ENCODE measurements at regions of chr1 and their contacts with region 1.

Region 1: DNA sequence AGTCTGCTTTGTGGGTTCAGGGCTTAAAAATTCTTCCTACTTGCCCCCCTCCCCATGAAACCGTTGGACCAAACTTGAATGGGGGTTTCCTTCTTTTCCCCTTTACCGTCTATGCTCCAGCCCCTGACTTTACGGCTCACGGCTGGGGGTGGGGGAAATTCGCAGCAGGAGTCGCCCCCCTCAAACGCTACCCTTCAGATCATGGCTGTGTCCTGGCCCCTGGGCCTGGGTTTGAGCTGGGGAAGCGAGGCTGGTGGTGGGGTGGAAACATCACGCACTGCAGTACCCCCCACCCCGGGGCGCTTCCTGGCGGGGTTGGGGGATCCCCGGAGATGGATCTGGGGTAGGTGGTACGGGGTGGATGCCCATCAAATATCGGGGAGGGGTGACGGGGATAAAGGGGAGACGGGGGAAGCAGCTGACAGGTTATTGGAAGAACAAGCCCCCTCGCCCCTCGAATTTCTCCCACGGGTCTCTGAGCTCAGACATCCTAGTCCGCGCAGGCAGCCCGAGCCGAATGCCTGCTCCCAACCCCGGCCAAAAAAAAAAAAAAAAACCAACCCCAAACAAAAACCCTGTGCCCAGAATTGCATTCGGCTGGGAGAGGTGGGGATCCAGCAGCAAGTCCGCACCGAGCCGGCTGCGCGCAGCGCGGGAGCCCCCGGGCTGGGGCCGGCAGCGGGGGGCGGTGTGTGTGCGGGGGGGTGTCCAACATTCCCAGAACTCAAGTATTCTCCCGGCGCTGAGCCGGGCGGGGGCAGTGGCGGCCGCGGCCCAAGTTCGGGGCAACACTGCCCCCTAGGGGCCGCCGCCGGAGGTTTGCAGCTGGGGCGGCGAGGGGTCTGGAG is 59.0 kb upstream of the ACOT11 start:
- DNase-seq: peak; percentile 94
- H3K4me3 Mint-ChIP-seq: peak overlapping the region; percentile 86
- H3K27ac Mint-ChIP-seq: peak overlapping the region; percentile 69
- H3K4me1 Mint-ChIP-seq: peaks cover 31% of the 10 kb centered on the region
- H3K27me3 Mint-ChIP-seq: peaks cover 29% of the 10 kb centered on the region

Region 2: DNA sequence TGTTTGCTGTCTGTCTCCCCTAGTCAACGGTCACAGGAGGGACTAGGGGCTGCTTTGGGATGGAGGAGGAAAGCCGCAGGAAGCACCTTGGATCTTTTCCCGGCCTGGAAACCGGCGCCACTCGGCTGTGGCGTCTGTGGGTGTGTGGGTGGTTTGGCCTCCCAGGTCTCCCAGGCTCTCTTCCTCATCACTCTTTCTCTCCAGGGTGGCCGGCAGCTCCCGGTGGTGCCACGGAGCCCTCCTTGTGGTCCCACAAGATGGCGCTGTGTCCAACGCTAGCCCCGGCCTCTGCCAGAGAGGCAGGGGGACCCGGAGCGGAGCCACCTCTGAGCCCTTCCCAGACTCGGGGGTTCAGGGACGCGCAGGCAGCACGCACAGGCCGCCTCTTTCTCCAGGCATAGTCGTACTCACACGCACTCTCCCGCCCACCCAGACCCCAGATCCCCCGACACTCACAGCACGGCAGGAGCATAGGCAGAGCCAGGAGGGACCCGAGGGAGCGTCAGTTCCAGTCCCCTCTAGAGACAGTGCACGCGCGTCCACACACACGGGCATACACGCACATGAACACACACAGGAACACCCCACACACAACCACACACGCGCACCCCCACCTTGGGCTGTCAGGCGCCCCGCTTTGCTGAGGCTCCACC is 367.4 kb before region 1 on chr1:
- intact Hi-C with region 1: loop called (anchors 1 kb)
- DNase-seq: peak; percentile 91
- H3K4me3 Mint-ChIP-seq: peak overlapping the region; percentile 43
- H3K27ac Mint-ChIP-seq: no peak overlapping the region
- H3K4me1 Mint-ChIP-seq: peaks cover 7% of the 10 kb centered on the region
- H3K27me3 Mint-ChIP-seq: peaks cover 10% of the 10 kb centered on the region

Region 3: DNA sequence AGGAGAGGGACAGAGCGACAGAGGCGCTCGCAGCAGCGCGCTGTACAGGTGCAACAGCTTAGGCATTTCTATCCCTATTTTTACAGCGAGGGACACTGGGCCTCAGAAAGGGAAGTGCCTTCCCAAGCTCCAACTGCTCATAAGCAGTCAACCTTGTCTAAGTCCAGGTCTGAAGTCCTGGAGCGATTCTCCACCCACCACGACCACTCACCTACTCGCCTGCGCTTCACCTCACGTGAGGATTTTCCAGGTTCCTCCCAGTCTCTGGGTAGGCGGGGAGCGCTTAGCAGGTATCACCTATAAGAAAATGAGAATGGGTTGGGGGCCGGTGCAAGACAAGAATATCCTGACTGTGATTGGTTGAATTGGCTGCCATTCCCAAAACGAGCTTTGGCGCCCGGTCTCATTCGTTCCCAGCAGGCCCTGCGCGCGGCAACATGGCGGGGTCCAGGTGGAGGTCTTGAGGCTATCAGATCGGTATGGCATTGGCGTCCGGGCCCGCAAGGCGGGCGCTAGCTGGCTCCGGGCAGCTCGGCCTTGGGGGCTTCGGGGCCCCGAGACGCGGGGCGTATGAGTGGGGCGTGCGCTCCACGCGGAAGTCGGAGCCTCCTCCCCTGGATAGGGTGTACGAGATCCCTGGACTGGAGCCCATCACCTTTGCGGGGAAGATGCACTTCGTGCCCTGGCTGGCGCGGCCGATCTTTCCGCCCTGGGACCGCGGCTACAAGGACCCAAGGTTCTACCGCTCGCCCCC is 289.1 kb before region 1 on chr1 and contains the starts of genes CYB5RL and MRPL37:
- intact Hi-C with region 1: loop called (anchors 1 kb)
- DNase-seq: peak; percentile 98
- H3K4me3 Mint-ChIP-seq: peak within 1 kb of the TSS; percentile 88
- H3K27ac Mint-ChIP-seq: peak within 1 kb of the TSS; percentile 73
- H3K4me1 Mint-ChIP-seq: peaks cover 29% of the 10 kb centered on the region
- H3K27me3 Mint-ChIP-seq: no peaks in the 10 kb centered on the region
- total RNA-seq, gene CYB5RL: 10.1 and 11.3 TPM in 2 replicates
- total RNA-seq, gene MRPL37: 158 and 162 TPM in 2 replicates

Region 4: DNA sequence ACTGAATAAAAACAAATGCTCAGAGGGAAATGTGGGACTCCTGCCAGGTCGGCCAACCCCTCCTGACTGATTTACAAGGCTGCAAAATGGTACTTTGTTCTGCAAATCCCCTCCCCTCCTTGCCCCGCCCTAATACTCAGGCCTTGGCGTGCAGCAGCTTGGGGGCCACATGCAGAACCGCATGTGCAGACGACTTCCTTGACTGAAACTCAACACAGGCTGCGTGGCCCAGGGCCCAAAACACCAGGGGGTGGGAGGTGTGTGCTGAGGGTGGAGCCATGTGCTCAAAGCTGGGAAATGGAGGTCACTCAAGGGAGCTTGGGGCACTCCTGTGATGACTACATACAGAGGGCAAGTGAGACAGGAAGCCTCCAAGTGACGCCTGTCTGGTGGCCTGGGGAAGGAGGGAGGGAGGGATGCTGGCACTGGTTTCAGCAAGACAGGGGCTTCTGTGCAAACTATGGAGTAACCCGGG is 201.8 kb before region 1 on chr1:
- intact Hi-C with region 1: loop called (anchors 2 kb)
- DNase-seq: peak; percentile 94
- H3K4me3 Mint-ChIP-seq: peak overlapping the region; percentile 81
- H3K27ac Mint-ChIP-seq: peak overlapping the region; percentile 97
- H3K4me1 Mint-ChIP-seq: peaks cover 83% of the 10 kb centered on the region
- H3K27me3 Mint-ChIP-seq: no peaks in the 10 kb centered on the region

Region 5: GRCh38 chr1:54474639-54475251 is 14.3 kb before region 1 on chr1:
- intact Hi-C with region 1: no loop called
- DNase-seq: peak; percentile 72
- H3K4me3 Mint-ChIP-seq: peak overlapping the region; percentile 71
- H3K27ac Mint-ChIP-seq: no peak overlapping the region
- H3K4me1 Mint-ChIP-seq: peaks cover 20% of the 10 kb centered on the region
- H3K27me3 Mint-ChIP-seq: peaks cover 24% of the 10 kb centered on the region

Region 6: GRCh38 chr1:54519709-54520108 is 30.7 kb after region 1 on chr1:
- intact Hi-C with region 1: no loop called
- DNase-seq: no peak
- H3K4me3 Mint-ChIP-seq: no peak overlapping the region
- H3K27ac Mint-ChIP-seq: no peak overlapping the region
- H3K4me1 Mint-ChIP-seq: no peaks in the 10 kb centered on the region
- H3K27me3 Mint-ChIP-seq: peaks cover 2% of the 10 kb centered on the region

Measured in activated CD4-positive, alpha-beta T cell treated with anti-CD3 and anti-CD28 coated beads, Interleukin-2, amount 10 ng/mL, durations not matched to agents 24 days and 14 days (primary cell).